ENCODE measurements at regions of chr4 and their contacts with region 1.

Region 1: GRCh38 chr4:53702334-53703266 is 111.3 kb upstream of the LNX1 start:
- DNase-seq: peak; percentile 87 to 88
- ATAC-seq: peak; percentile 93 to 97 (median 95)
- H3K4me3 ChIP-seq: peak overlapping the region in 9 of 10 donors; percentile 14 to 46 (median 36)
- H3K27ac ChIP-seq: peak overlapping the region; percentile 36 to 85 (median 72)
- H3K4me1 ChIP-seq: peaks cover 8 to 45% (median 33%) of the 10 kb centered on the region in 9 donors
- H3K27me3 ChIP-seq: no peaks in the 10 kb centered on the region
- CTCF ChIP-seq: peak in 3 of 9 donors; percentile 14 to 23 (median 20)

Region 2: DNA sequence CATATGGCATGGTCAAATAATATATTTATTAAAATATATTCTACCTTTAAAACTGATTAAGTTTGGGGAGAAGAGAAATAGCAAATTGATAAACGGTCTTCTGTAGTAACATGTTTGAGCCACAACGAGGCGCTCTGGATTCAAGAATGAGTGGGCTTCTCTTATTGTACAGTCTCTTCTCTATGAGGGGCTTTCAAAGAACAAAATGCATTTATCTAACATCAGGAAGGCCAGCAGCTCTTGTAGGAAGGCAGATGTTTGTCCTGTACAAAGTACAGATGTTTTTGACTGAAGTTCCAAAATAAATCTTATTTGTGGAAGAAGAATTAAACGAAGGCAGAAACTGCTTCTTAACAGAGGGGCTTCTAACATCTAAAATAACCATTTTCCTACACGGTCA is 686.9 kb before region 1 on chr4:
- intact Hi-C with region 1: loop called in 1 of 10 experiments (anchors 10 kb)
- DNase-seq: peak in 1 of 2 donors; percentile 38
- ATAC-seq: peak in 1 of 8 donors; percentile 29
- H3K4me3 ChIP-seq: no peak overlapping the region
- H3K27ac ChIP-seq: no peak overlapping the region
- H3K4me1 ChIP-seq: peaks cover 6 to 70% (median 55%) of the 10 kb centered on the region in 9 donors
- H3K27me3 ChIP-seq: no peaks in the 10 kb centered on the region
- CTCF ChIP-seq: peak; percentile 35 to 80 (median 66)

Region 3: DNA sequence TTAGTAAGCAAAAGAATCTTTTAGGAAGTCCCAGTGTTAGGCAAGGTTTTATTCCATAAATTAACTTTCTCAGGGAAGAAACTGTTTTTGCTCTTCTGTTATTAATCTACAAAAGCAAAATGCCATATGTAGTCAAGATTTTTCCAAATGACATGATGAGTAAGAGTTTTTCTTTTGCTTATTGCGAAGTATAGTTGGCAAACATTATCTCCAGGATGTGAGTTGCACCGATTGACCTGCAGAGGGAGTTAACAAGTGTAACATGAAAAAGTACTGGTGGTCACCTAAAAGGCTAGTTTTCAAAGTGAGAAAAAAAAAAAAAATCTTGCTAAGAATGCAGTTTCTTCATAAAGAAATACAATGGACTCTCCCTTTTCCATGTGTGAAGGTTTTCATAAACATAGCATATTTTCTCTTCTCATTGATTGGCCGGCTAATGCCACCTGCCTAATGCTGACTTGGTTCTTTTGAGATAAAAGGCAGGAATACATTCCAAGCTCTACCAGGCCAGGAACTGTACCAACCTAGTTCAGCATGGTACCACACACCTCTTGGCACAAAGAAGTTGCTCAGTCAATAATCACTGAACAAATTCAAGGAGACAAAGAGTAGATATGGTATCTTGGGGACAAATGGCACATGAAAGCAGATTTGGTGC is 211.5 kb before region 1 on chr4:
- intact Hi-C with region 1: loop called in 4 of 10 experiments (anchors 5 to 10 kb)
- DNase-seq: peak in 1 of 2 donors; percentile 30
- ATAC-seq: peak in 6 of 8 donors; percentile 42 to 72 (median 52)
- H3K4me3 ChIP-seq: no peak overlapping the region
- H3K27ac ChIP-seq: peak overlapping the region in 4 of 10 donors; percentile 12 to 65 (median 25)
- H3K4me1 ChIP-seq: peaks cover 0 to 16% (median 8%) of the 10 kb centered on the region in 9 donors
- H3K27me3 ChIP-seq: peaks cover 0 to 5% (median 0%) of the 10 kb centered on the region in 7 donors
- CTCF ChIP-seq: peak; percentile 37 to 78 (median 71)

Region 4: GRCh38 chr4:53592686-53593501 is 109.7 kb before region 1 on chr4:
- intact Hi-C with region 1: loop called in 1 of 10 experiments (anchors 10 kb)
- DNase-seq: peak; percentile 31 to 48
- ATAC-seq: peak; percentile 62 to 87 (median 71)
- H3K4me3 ChIP-seq: peak overlapping the region in 7 of 10 donors; percentile 10 to 47 (median 37)
- H3K27ac ChIP-seq: peak overlapping the region in 7 of 10 donors; percentile 4 to 63 (median 55)
- H3K4me1 ChIP-seq: peaks cover 0 to 21% (median 9%) of the 10 kb centered on the region in 9 donors
- H3K27me3 ChIP-seq: no peaks in the 10 kb centered on the region
- CTCF ChIP-seq: no peak

Region 5: DNA sequence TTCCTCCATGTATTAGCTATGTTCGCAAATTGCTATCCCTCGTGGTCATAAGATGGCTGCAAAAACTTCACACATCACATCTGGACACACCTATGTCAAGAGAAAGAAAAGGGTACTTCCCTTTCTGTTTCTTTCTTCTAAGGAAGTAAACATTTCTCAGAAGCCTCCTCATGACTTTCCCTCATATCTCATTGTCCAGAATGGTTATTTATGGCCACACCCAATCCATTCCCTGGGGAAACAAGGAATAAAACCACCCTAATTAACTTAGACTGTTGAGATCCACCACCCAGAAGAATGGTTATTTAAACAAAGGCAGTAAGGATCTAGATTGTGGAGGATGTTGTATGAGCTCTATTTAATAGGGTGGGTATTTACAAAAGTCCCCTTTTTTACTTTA is 49.5 kb after region 1 on chr4:
- intact Hi-C with region 1: no loop called
- DNase-seq: no peak
- ATAC-seq: no peak
- H3K4me3 ChIP-seq: no peak overlapping the region
- H3K27ac ChIP-seq: no peak overlapping the region
- H3K4me1 ChIP-seq: no peaks in the 10 kb centered on the region
- H3K27me3 ChIP-seq: peaks cover 0 to 23% (median 3%) of the 10 kb centered on the region in 7 donors
- CTCF ChIP-seq: no peak

Region 6: GRCh38 chr4:53908661-53909078 is 206.1 kb after region 1 on chr4:
- intact Hi-C with region 1: loop called in 3 of 10 experiments (anchors 5 to 10 kb)
- DNase-seq: peak in 1 of 2 donors; percentile 59
- ATAC-seq: peak; percentile 80 to 93 (median 91)
- H3K4me3 ChIP-seq: peak overlapping the region in 7 of 10 donors; percentile 8 to 30 (median 23)
- H3K27ac ChIP-seq: peak overlapping the region in 7 of 10 donors; percentile 10 to 66 (median 51)
- H3K4me1 ChIP-seq: peaks cover 4 to 39% (median 26%) of the 10 kb centered on the region in 9 donors
- H3K27me3 ChIP-seq: peaks cover 0 to 52% (median 27%) of the 10 kb centered on the region in 7 donors
- CTCF ChIP-seq: peak; percentile 7 to 89 (median 74)

Region 7: GRCh38 chr4:54228056-54228527 is 525.5 kb after region 1 on chr4:
- intact Hi-C with region 1: loop called in 6 of 10 experiments (anchors 5 to 10 kb)
- DNase-seq: peak; percentile 75 to 79
- ATAC-seq: peak; percentile 61 to 81 (median 68)
- H3K4me3 ChIP-seq: peak overlapping the region; percentile 4 to 64 (median 54)
- H3K27ac ChIP-seq: peak overlapping the region; percentile 6 to 85 (median 68)
- H3K4me1 ChIP-seq: peaks cover 5 to 74% (median 62%) of the 10 kb centered on the region in 9 donors
- H3K27me3 ChIP-seq: peaks cover 20 to 100% (median 98%) of the 10 kb centered on the region in 7 donors
- CTCF ChIP-seq: peak; percentile 49 to 87 (median 71)

Measured in heart right ventricle (tissue), 16 donors.